ENCODE measurements at regions of chr17 and their contacts with region 1.

Region 1: GRCh38 chr17:43338886-43339516 is 59.8 kb upstream of the ARL4D start:
- DNase-seq: peak; percentile 61 to 68 (median 65)
- H3K4me3 ChIP-seq: no peak overlapping the region
- H3K27ac ChIP-seq: no peak overlapping the region
- H3K4me1 ChIP-seq: peaks cover 0 to 11% (median 6%) of the 10 kb centered on the region in 4 experiments
- H3K27me3 ChIP-seq: no peaks in the 10 kb centered on the region

Region 2: DNA sequence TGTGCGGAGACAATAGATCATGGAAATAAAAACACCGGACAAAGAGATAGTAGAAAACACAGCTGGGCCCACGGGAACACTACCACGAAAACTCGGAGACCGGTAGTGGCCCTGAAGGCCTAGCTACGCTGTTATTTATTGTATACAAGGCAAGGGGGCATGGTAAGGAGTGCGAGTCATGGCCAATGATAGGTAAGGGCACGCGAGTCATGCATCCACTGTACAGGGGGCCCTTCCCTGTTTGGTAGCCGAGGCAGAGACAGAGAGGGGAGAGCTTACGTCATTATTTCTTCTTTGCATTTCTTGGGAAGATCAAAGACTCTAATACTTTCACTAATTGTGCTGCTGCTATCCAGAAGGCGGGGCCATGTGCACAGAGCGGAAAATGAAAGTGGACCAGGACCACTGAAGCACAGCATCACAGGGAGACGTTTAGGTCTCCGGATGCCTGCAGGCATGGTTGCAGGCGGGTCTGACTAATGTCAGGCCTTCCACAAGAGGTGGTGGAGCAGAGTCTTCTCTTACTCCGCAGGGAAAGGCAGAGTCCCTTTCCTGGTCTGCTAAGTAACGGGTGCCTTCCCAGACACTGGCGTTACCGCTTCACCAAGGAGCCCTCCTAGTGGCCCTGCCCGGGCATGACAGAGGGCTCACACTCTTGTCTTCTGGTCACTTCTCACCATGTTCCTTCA is 14.7 kb before region 1 on chr17:
- CTCF ChIA-PET with region 1: interaction called, 20 read pairs
- POLR2A ChIA-PET with region 1: no interaction called
- DNase-seq: no peak
- H3K4me3 ChIP-seq: no peak overlapping the region
- H3K27ac ChIP-seq: no peak overlapping the region
- H3K4me1 ChIP-seq: no peaks in the 10 kb centered on the region
- H3K27me3 ChIP-seq: peaks cover 0 to 4% (median 0%) of the 10 kb centered on the region in 5 experiments